Left ventricle myocardium inferior (tissue), 1 donor: ENCODE measurements at regions of chr19 and their contacts with region 1.

Region 1: GRCh38 chr19:2070436-2070827 is 19.4 kb upstream of the MKNK2 start:
- DNase-seq: no peak
- H3K4me3 ChIP-seq: no peak overlapping the region
- H3K27ac ChIP-seq: no peak overlapping the region
- H3K4me1 ChIP-seq: peaks cover 6% of the 10 kb centered on the region
- H3K27me3 ChIP-seq: no peaks in the 10 kb centered on the region
- CTCF ChIP-seq: no peak

Region 2: GRCh38 chr19:1956868-1957492 is 113.5 kb before region 1 on chr19:
- intact Hi-C with region 1: no loop called
- DNase-seq: peak; percentile 42
- H3K4me3 ChIP-seq: no peak overlapping the region
- H3K27ac ChIP-seq: no peak overlapping the region
- H3K4me1 ChIP-seq: peaks cover 3% of the 10 kb centered on the region
- H3K27me3 ChIP-seq: no peaks in the 10 kb centered on the region
- CTCF ChIP-seq: no peak

Region 3: GRCh38 chr19:2016041-2016807 is 54.2 kb before region 1 on chr19:
- intact Hi-C with region 1: loop called (anchors 5 kb)
- DNase-seq: peak; percentile 82
- H3K4me3 ChIP-seq: peak overlapping the region; percentile 55
- H3K27ac ChIP-seq: peak overlapping the region; percentile 64
- H3K4me1 ChIP-seq: peaks cover 25% of the 10 kb centered on the region
- H3K27me3 ChIP-seq: no peaks in the 10 kb centered on the region
- CTCF ChIP-seq: no peak